Activated CD4-positive, alpha-beta memory T cell treated with anti-CD3 and anti-CD28 coated beads, Interleukin-2, amount 10 ng/mL, durations not matched to agents 7 days and 5 days (primary cell): ENCODE measurements at regions of chr2 and their contacts with region 1.

Region 1: DNA sequence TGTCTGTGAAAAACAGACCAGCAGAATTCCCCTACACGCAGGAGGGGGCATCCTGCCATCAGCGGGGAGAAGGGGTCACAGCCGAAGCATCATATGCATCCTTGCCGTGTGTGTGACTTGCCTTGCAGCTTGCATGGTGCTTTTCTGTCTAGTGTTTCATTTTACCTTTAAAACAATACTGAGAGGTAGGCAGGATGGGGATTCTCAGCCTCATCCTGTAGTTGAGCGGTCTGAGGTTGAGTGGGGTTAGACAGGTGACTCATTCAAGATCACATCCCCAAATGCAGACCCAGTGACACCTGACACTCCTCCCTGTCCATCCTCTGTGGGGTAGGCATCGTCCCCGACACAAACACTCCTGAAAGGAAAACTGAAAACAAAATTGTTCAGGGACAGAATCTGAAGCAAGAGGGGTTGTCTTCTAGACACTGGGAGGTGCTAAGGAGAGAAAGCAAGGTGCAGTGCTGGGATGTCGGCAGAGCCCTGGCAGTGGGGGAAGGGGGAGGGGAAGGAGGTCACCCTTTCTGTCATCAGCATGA is 7.9 kb downstream of the ARL4C start:
- DNase-seq: peak; percentile 87
- H3K4me3 Mint-ChIP-seq: peak overlapping the region; percentile 99
- H3K27ac Mint-ChIP-seq: peak overlapping the region; percentile 100
- H3K4me1 Mint-ChIP-seq: peaks cover 73% of the 10 kb centered on the region
- H3K27me3 Mint-ChIP-seq: no peaks in the 10 kb centered on the region

Region 2: DNA sequence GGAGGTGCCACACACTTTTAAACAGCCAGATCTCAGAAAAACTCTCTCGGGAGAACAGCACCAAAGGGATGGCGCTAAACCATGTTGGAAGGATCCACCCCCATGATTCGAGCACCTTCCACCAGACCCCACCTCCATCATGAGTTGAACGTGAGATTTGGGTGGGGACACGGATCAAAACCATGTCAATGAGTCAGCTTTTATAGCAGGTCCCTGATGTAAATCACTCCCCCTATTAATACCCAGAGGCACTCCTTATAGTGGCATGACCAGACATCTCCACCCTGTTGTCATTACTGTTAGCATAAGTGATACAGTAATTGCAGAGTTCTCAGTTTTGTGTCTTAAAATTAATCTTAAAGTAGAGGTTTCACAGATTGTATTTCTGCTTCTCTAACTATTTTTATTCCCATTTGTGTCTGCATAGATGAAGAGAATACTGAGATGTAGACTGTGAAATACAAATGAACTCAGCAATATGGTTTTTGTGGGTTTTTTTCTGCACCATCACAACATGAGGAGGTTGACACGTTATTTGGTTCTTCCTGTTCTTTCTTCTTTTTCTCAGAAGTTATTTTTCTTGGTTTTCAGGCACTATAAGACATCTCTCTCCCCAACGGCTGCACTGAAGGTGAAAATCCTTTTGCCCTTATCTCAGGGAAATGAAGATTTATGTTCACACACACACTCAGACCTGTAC is 210.3 kb before region 1 on chr2:
- CTCF ChIA-PET with region 1: no interaction called
- POLR2A ChIA-PET with region 1: interaction called, 572 read pairs
- DNase-seq: peak; percentile 39
- H3K4me3 Mint-ChIP-seq: no peak overlapping the region
- H3K27ac Mint-ChIP-seq: peak overlapping the region; percentile 89
- H3K4me1 Mint-ChIP-seq: peaks cover 79% of the 10 kb centered on the region
- H3K27me3 Mint-ChIP-seq: no peaks in the 10 kb centered on the region

Region 3: GRCh38 chr2:234308813-234309195 is 180.2 kb before region 1 on chr2:
- CTCF ChIA-PET with region 1: interaction called, 3 read pairs
- POLR2A ChIA-PET with region 1: interaction called, 51 read pairs
- DNase-seq: peak; percentile 83
- H3K4me3 Mint-ChIP-seq: peak overlapping the region; percentile 29
- H3K27ac Mint-ChIP-seq: peak overlapping the region; percentile 97
- H3K4me1 Mint-ChIP-seq: peaks cover 64% of the 10 kb centered on the region
- H3K27me3 Mint-ChIP-seq: no peaks in the 10 kb centered on the region

Region 4: DNA sequence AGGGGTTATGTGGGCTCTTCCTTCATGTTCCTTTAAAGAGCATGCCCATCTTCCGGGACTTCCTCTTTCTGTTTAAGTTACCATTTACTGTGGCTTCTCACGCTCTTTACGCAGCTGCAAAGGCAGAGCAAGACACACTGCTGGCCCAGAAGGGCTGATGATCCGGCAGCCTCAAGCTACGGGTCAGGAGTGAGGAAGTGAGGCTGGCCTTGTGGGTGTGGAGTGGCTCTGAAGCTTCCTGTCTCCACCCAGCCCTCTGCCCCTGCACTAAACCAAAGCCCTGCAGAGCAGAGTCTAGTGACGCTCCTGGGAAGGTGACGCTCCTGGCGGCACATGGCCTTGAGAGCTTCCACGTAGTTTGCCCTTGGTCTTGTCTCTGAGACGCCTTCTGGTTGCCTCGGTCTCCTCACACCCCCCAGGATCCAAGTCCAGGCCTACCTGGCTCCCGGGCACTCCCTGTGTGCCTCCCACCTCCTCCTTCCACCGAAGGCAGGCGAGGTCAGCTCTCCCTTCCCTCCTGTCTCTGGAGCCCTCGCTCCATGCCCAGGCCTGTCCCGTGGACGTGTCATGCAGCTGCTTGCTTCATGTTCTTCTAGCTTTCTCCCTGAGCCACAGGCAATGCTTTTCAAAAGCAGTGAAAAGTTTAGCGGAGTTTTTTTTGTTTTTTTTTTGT is 42.4 kb before region 1 on chr2:
- CTCF ChIA-PET with region 1: interaction called, 13 read pairs
- POLR2A ChIA-PET with region 1: interaction called, 390 read pairs
- DNase-seq: peak; percentile 93
- H3K4me3 Mint-ChIP-seq: peak overlapping the region; percentile 55
- H3K27ac Mint-ChIP-seq: peak overlapping the region; percentile 99
- H3K4me1 Mint-ChIP-seq: peaks cover 82% of the 10 kb centered on the region
- H3K27me3 Mint-ChIP-seq: no peaks in the 10 kb centered on the region

Region 5: DNA sequence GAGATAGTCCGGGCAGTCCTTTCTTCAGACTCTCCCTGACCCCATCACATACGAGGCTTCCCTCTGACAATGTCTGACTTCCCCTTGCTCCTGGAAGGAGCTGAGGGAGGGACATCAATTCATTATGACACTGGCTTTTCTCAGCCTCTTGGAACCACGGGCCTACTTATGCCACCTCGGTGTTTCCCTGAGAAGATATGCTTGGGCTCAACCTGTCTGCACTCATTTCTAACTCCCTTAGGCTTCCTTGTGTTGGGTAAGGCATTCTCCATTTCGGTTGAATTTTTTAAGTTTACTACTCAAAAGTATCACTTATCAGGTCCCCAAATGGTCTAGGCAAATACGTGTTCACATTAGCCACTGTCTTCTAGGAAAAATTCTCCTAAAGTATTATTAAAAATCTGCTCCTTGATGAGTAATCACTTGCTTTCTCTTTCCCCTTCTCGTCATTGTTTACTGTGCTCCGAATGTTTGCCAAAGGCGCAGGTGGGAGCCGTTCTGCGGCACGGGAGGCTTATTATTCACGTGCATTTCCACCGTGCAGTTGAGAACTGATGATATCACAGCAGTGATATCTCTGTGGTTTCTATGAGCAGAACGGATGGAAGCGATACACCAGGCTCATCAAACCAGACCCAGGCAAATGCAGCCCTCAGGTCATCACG is 25.2 kb before region 1 on chr2:
- CTCF ChIA-PET with region 1: interaction called, 11 read pairs
- POLR2A ChIA-PET with region 1: interaction called, 143 read pairs
- DNase-seq: peak; percentile 78
- H3K4me3 Mint-ChIP-seq: peak overlapping the region; percentile 58
- H3K27ac Mint-ChIP-seq: peak overlapping the region; percentile 86
- H3K4me1 Mint-ChIP-seq: peaks cover 61% of the 10 kb centered on the region
- H3K27me3 Mint-ChIP-seq: no peaks in the 10 kb centered on the region

Region 6: DNA sequence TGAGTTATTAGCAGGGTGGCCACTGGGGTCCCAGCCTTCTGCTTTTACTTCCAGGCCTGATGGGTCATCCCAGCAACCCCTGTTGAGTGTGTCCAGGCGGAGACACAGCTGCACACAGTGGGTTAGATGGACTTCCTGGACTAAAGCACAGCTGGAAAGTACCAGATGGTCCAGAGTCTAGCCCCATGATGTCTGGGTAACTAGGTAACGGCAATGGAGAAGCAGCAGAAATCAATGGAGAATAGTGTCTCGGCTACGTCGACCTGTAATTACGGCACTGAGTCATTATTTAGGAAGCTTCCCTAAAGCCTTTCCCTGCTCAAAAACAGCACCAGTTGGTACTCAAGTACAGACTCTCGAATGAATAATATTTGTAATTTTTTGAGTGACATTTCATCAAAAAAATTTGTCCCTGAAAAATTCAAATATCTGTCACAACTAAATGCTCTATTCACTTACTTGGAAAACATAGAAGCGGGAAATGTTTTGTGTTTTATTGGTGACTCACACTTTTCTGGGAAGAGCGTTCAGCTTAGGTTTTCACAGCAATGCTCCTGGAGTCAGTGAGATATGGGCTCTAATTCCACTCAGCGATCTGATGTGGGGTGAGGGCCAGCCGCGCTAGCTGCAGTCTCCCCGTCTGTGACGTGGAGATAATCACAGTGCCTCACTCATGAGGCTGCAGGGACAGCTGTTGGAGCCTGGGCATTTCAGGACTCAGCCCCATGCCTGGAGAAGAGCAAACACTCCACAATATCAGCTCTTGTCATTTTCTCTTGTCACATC is 24.1 kb after region 1 on chr2:
- CTCF ChIA-PET with region 1: no interaction called
- POLR2A ChIA-PET with region 1: no interaction called
- DNase-seq: no peak
- H3K4me3 Mint-ChIP-seq: no peak overlapping the region
- H3K27ac Mint-ChIP-seq: no peak overlapping the region
- H3K4me1 Mint-ChIP-seq: no peaks in the 10 kb centered on the region
- H3K27me3 Mint-ChIP-seq: peaks cover 20% of the 10 kb centered on the region

Region 7: GRCh38 chr2:234544659-234545611 is 56.0 kb after region 1 on chr2:
- CTCF ChIA-PET with region 1: no interaction called
- POLR2A ChIA-PET with region 1: no interaction called
- DNase-seq: peak; percentile 81
- H3K4me3 Mint-ChIP-seq: no peak overlapping the region
- H3K27ac Mint-ChIP-seq: no peak overlapping the region
- H3K4me1 Mint-ChIP-seq: peaks cover 9% of the 10 kb centered on the region
- H3K27me3 Mint-ChIP-seq: peaks cover 33% of the 10 kb centered on the region